GM12878 (cell line): ENCODE measurements at regions of chr19 and their contacts with region 1.

Region 1: DNA sequence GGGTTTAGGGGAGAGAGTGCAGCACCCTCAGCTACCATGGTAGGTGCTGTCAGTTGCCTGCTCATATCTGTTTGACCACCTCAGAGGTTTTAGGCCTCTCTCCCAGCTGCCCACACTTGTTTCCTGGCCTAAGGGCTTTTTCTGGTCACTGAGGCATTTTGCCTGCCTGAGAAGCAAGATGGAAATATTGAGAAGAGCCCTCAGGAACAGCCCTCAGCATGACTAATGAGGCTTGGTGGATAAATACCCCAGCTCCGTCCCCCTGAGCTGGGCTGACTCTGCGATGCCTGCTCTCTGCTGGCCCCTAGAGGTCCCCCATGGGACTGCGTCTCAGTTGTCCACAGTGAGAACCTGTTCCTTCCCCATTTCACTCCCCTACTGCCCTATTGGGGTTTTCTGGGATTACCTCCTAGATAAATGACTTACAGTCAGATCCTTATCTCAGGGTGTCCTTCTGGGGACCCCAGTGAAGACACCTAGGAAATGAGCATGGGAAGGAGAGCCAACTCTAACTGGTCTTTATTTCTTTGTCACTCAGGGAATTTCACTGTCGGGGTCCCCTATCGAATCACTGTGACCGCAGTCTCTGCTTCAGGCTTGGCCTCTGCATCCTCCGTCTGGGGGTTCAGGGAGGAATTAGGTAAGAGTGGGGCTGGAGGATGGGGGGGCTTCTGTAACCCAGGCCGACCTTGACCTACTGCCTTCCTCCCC is 13.3 kb downstream of the PALM3 start:
- DNase-seq: no peak
- ATAC-seq: peak; percentile 87
- H3K4me3 ChIP-seq: no peak overlapping the region
- H3K27ac ChIP-seq: no peak overlapping the region
- H3K4me1 ChIP-seq: no peaks in the 10 kb centered on the region
- H3K27me3 ChIP-seq: no peaks in the 10 kb centered on the region
- CTCF ChIP-seq: peak; percentile 73 to 95 (median 92)
- EP300 ChIP-seq: no peak
- POLR2A ChIP-seq: no peak
- RAD21 ChIP-seq: peak; percentile 57

Region 2: GRCh38 chr19:13902993-13903614 is 145.5 kb before region 1 on chr19:
- CTCF ChIA-PET with region 1: interaction called, 21 read pairs
- POLR2A ChIA-PET with region 1: interaction called, 5 read pairs
- RAD21 ChIA-PET with region 1: interaction called, 9 read pairs
- SMC1A ChIA-PET with region 1: interaction called, 4 read pairs
- in situ Hi-C with region 1: no loop called
- intact Hi-C with region 1: no loop called
- DNase-seq: no peak
- ATAC-seq: peak; percentile 42
- H3K4me3 ChIP-seq: no peak overlapping the region
- H3K27ac ChIP-seq: no peak overlapping the region
- H3K4me1 ChIP-seq: no peaks in the 10 kb centered on the region; the same call in 1 of the 2 replicates
- H3K27me3 ChIP-seq: no peaks in the 10 kb centered on the region
- CTCF ChIP-seq: peak; percentile 48; a peak in 5 of 6 replicates
- EP300 ChIP-seq: no peak
- POLR2A ChIP-seq: no peak
- RAD21 ChIP-seq: peak; percentile 38; the same call in 1 of the 2 replicates